ENCODE measurements at regions of chr5 and their contacts with region 1.

Region 1: DNA sequence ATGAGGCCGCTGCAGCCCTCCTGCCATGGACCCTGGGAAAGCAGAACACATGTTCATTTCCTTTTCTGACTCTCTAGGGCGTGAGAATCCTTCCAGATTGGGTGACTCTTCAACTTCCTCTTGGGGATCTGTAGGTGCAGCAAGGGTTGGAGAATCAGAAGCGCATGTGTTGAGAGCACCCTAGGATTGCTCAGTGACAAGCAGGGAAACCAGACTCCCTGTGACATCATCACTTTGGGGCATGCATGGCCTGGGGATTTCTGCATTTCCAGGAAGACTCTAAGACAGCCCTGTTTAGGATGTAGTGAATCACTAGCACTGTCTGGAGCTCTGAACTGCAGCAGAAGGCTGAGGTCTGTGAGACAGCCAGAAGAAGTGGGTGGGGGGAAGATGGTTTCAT is 15.1 kb upstream of the LCP2 start:
- DNase-seq: peak; percentile 70
- ATAC-seq: peak; percentile 70
- H3K4me3 Mint-ChIP-seq: peak overlapping the region; percentile 32
- H3K27ac Mint-ChIP-seq: peak overlapping the region; percentile 73
- H3K4me1 Mint-ChIP-seq: peaks cover 31% of the 10 kb centered on the region
- H3K27me3 Mint-ChIP-seq: no peaks in the 10 kb centered on the region

Region 2: GRCh38 chr5:170293273-170293672 is 19.4 kb before region 1 on chr5:
- CTCF ChIA-PET with region 1: interaction called, 27 read pairs
- DNase-seq: peak; percentile 95
- ATAC-seq: peak; percentile 62
- H3K4me3 Mint-ChIP-seq: peak overlapping the region; percentile 95
- H3K27ac Mint-ChIP-seq: peak overlapping the region; percentile 95
- H3K4me1 Mint-ChIP-seq: peaks cover 63% of the 10 kb centered on the region
- H3K27me3 Mint-ChIP-seq: no peaks in the 10 kb centered on the region

Region 3: DNA sequence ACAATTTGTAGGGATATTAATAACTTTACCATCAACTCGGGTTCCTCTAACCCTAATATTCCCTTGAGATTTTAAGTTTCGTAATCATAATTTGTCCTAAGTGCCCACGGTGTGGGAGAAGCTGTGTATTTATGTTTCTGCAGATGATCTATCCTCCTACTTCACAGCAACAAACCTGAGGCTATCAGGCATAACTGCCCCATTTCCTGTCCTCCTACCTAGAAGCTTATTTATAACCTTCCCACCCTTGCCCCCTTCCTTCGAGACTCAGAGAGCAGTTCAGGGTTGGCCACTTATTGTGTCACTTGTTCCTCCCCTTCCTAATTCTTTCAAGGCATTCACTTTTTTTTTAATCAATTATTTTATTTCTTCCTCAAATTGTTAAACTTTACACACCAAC is 14.5 kb after region 1 on chr5:
- CTCF ChIA-PET with region 1: interaction called, 24 read pairs
- DNase-seq: no peak
- ATAC-seq: no peak
- H3K4me3 Mint-ChIP-seq: no peak overlapping the region
- H3K27ac Mint-ChIP-seq: no peak overlapping the region
- H3K4me1 Mint-ChIP-seq: peaks cover 2% of the 10 kb centered on the region
- H3K27me3 Mint-ChIP-seq: no peaks in the 10 kb centered on the region